ENCODE measurements at regions of chr9 and their contacts with region 1.

Region 1: DNA sequence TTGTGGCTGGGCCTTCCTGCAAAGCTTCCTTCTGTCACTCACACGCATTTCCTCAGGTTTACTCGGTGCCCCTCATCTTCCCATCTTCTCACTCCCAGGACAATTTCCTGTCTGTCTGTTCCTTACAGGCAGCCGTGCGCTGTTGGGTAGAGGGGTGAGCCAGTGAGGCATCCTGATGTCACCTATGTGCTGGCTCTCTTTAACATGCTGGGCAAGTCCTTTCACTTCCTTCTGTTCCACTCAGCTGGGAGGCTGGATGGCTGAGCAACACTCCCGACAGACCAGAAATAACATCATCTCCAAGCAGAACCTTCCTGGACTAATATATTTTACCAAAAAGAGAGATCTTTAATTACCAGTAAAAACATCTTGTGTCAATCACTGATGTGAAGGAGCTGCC is 103.0 kb downstream of the HSD17B3 start:
- DNase-seq: no peak
- H3K4me3 ChIP-seq: no peak overlapping the region
- H3K27ac ChIP-seq: no peak overlapping the region
- H3K4me1 ChIP-seq: no peaks in the 10 kb centered on the region
- H3K27me3 ChIP-seq: no peaks in the 10 kb centered on the region
- CTCF ChIP-seq: no peak
- POLR2A ChIP-seq: no peak

Region 2: DNA sequence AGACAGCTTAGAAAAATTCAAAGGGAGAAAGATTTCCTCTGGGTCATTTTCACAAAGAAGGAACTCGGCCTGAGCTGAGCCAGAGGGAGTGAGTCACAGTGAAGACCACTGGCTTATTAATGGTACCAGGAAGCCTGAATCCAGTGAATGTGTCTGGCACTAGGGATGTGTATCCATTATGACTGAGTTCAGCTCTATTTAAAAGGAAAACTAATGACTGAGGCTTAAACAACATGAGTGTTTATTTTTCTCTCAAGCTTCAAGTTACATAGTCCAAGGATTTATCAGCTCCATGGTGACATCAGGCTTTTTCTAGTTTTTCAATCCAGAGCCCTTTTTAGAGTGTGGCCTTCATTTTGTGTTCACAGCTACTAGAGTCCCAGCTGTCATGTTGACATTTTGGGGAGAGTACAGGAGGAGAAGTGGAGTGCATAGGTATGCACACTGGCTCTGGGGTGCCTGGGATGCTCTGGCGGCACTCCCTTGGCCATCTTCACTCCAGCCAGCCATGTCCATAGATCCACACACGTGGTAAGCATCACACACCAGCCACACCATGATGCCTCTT is 483.1 kb before region 1 on chr9:
- intact Hi-C with region 1: loop called (anchors 5 kb)
- DNase-seq: no peak
- H3K4me3 ChIP-seq: no peak overlapping the region
- H3K27ac ChIP-seq: no peak overlapping the region
- H3K4me1 ChIP-seq: peaks cover 4% of the 10 kb centered on the region
- H3K27me3 ChIP-seq: no peaks in the 10 kb centered on the region
- CTCF ChIP-seq: no peak
- POLR2A ChIP-seq: no peak

Measured in prostate gland (tissue), 2 donors.